ENCODE measurements at regions of chr3 and their contacts with region 1.

Region 1: DNA sequence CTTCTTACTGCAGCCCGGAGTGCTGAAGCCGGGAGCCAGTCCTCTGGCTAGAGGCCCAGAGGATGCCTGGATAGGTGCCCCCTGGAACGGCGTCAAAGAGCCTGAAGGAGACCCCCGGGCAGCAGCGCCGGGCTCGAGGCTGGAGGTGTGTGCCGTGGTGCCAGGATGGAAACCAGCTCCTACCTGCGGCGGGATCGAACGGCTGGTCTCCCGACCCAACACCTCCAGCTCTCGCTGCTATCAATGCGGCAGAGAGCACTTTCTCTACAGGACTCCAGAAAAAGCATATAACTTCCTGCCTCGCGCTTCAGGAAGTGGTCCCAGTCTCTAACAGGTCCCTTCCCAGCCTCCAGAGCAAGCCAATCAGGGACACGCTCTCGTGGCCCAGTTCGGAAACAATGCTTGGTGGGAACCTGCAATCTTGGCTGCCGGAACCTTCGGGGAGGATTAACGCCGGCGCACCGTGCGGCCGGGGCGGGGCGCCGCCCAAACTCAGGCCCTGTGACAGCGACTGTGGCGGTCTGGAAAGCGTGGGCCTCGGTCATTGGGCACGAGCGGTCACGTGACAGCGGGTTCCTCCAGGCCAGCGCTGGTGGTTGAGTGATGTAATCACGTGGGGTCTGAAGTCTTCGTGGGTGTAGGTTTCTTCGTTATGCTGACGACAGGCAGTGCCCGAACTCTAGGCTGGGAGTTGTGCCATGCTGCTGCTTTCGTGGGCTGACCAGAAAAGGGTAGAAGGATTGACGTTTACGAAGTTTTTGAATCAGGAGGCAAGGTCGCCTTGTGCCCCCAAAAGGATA is at the start of gene SLC33A1:
- DNase-seq: peak; percentile 99
- H3K4me3 Mint-ChIP-seq: peak within 1 kb of the TSS; percentile 87
- H3K27ac Mint-ChIP-seq: peak within 1 kb of the TSS; percentile 99
- H3K4me1 Mint-ChIP-seq: no peaks in the 10 kb centered on the region
- H3K27me3 Mint-ChIP-seq: no peaks in the 10 kb centered on the region
- CTCF ChIP-seq: no peak
- total RNA-seq, gene SLC33A1: 65.6 and 91.7 TPM in 2 replicates

Region 2: GRCh38 chr3:155753036-155753639 is 101.2 kb before region 1 on chr3:
- CTCF ChIA-PET with region 1: no interaction called
- POLR2A ChIA-PET with region 1: interaction called, 4 read pairs
- intact Hi-C with region 1: loop called (anchors 5 kb)
- DNase-seq: peak; percentile 53
- H3K4me3 Mint-ChIP-seq: no peak overlapping the region
- H3K27ac Mint-ChIP-seq: no peak overlapping the region
- H3K4me1 Mint-ChIP-seq: peaks cover 5% of the 10 kb centered on the region
- H3K27me3 Mint-ChIP-seq: peaks cover 3% of the 10 kb centered on the region
- CTCF ChIP-seq: peak; percentile 52

Region 3: DNA sequence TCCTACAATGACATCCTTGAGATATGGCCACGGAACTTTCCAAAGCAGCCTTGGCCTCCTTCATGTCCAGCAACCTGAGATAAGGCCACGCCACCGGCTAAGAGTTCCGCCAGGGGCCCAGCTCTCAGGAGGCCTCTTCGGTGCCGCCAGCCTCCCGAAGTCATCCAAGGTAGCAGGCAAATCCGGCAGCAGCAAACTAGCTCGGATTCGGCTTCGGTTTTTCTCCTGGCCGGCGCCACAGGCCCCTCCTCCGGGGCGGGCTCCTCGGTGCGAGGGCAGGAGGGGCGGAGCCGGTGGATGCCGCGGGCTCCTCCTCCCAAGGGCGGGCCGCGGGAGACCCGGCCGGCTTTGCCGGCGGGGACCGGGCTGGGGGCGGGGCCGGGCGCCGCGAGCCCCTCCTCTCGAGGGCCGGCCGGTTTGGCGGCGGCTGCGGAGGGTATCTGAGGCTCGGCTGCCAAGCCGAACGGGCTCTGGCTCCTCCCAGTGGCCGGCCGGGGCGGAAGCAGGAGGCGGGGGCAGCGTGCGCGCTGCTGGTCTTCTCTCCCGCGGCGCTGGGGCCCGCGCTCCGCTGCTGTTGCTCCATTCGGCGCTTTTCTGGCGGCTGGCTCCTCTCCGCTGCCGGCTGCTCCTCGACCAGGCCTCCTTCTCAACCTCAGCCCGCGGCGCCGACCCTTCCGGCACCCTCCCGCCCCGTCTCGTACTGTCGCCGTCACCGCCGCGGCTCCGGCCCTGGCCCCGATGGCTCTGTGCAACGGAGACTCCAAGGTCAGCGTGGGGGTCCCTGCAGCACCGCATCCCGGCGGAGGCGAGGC is 16.0 kb after region 1 on chr3 and contains the start of gene GMPS:
- CTCF ChIA-PET with region 1: interaction called, 8 read pairs
- POLR2A ChIA-PET with region 1: interaction called, 104 read pairs
- intact Hi-C with region 1: loop called (anchors 1 kb)
- DNase-seq: peak; percentile 93
- H3K4me3 Mint-ChIP-seq: peak within 1 kb of the TSS; percentile 84
- H3K27ac Mint-ChIP-seq: peak within 1 kb of the TSS; percentile 64
- H3K4me1 Mint-ChIP-seq: peaks cover 18% of the 10 kb centered on the region
- H3K27me3 Mint-ChIP-seq: no peaks in the 10 kb centered on the region
- CTCF ChIP-seq: peak; percentile 28
- total RNA-seq, gene GMPS: 92.4 and 128 TPM in 2 replicates

Region 4: DNA sequence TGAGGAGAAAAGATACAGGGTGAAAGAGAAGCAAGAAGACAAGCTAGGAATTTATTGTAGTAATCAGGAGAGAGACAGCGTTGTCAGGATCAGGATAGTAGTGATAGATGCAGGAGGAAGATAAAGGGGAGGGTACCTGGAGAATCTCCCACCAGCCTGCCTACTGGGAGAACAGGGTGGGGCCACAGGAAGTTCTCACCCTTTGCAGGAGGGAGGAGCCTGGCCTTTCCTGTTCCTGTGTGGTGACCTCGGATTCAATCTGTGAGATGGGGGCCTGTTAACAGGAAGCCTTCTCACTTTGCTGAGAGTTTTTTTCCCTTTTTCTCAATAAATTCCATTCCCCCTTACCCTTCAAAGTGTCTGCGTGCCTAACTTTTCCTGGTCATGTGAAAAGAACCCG is 53.7 kb after region 1 on chr3:
- CTCF ChIA-PET with region 1: no interaction called
- POLR2A ChIA-PET with region 1: interaction called, 3 read pairs
- intact Hi-C with region 1: loop called (anchors 2 kb)
- DNase-seq: no peak
- H3K4me3 Mint-ChIP-seq: no peak overlapping the region
- H3K27ac Mint-ChIP-seq: peak overlapping the region; percentile 1
- H3K4me1 Mint-ChIP-seq: no peaks in the 10 kb centered on the region
- H3K27me3 Mint-ChIP-seq: no peaks in the 10 kb centered on the region
- CTCF ChIP-seq: no peak

Region 5: DNA sequence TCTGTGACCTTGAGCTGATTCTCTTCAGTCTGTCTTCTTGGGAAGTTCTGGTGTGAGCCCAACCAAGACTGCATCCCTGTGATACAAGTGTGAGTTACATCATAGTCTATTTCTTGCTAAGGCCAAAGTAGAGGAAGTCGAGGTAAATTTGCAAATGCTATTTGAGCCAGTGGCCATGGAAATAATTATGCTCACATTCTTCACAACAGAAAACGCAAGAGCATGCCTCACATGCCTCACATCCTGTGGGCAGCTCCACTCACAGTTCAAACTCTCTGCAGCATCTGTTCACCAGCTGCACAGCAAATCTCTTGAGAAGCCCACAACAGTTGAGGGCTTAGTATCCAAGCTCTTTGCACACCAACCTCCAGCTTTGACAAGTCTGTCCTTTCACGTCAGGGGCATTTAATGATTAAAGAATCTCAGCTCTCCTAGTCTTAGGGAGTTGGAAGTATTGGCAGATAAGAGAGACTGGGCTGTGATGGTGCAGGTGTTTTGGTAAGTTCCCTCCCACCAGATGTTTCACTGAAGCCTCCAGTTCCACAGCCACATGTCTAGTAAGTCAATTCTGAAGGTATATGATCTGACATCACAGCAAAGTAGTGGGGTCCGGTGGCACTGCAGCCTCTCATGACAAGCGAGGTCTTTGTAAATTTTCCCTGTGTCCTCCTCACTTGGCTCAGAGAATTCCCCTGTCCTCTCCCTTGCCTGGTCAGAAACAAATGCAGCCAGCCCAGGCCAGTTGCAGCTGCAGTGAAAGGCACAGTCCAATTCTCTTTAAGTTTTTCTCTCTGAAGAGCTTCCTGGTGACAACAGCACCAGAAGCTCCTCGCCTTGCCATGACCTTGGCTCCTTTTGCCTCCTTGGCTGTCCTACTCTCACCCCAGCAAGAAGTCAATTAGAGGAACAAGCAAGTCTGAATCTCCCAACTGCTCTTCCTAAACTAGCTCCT is 534.4 kb after region 1 on chr3:
- CTCF ChIA-PET with region 1: no interaction called
- POLR2A ChIA-PET with region 1: no interaction called
- intact Hi-C with region 1: no loop called
- DNase-seq: no peak
- H3K4me3 Mint-ChIP-seq: no peak overlapping the region
- H3K27ac Mint-ChIP-seq: no peak overlapping the region
- H3K4me1 Mint-ChIP-seq: no peaks in the 10 kb centered on the region
- H3K27me3 Mint-ChIP-seq: peaks cover 97% of the 10 kb centered on the region
- CTCF ChIP-seq: no peak

Measured in MCF 10A (cell line).